Naive thymus-derived CD8-positive, alpha-beta T cell (primary cell): ENCODE measurements at regions of chr1 and their contacts with region 1.

Region 1: DNA sequence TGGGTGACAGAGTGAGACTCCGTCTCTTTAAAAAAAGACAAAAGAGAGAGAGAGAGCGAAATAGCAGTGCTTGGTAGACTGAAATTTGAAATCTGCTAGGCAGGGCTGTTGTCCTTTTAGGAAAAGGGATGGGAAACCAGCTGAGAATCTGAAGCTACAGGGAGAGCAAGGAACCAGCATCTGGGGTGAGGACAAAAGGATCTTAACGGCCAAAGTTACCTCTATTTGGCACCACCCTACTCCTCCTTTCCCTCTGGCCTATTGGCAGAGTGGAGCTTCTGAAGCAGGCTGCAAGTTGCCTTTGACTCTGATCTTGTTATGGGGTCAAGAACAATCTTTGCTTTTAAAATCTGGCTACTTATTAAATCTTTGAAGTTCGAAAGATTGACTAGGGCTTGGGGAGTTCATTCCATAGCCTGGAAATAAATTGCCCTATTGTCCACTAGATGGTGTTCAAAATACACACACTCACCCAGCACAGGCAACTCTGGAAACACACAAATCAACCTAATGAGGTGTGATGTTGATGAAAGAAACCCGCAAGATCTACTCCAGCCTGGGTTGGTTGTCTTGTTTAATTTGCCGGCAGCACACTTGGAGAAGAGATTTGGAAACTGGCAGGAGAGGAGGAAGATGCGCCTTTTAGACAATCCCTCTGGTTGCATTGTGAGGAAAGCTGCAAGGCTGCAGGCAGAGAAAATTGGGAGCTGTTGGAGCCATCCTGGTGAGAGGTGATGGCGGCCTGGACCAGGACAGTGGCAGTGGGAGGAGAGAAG is 16.5 kb upstream of the PARP1 start:
- DNase-seq: peak in 3 of 10 donors; percentile 42 to 58 (median 56)
- ATAC-seq: peak; percentile 61 to 65
- H3K4me3 Mint-ChIP-seq: peak overlapping the region in 2 of 10 donors; percentile 33 to 58
- H3K27ac Mint-ChIP-seq: peak overlapping the region in 2 of 10 donors; percentile 25 to 70
- H3K4me1 Mint-ChIP-seq: peaks cover 18 to 37% (median 33%) of the 10 kb centered on the region in 4 donors
- H3K27me3 Mint-ChIP-seq: no peaks in the 10 kb centered on the region

Region 2: GRCh38 chr1:226407497-226408284 is 16.7 kb before region 1 on chr1 and contains the start of gene PARP1:
- POLR2A ChIA-PET with region 1: interaction called, 21 read pairs
- DNase-seq: peak; percentile 79 to 93 (median 88)
- ATAC-seq: peak; percentile 85 to 86
- H3K4me3 Mint-ChIP-seq: peak within 1 kb of the TSS; percentile 92 to 100 (median 97)
- H3K27ac Mint-ChIP-seq: peak within 1 kb of the TSS; percentile 87 to 98 (median 96)
- H3K4me1 Mint-ChIP-seq: peaks cover 31 to 53% (median 50%) of the 10 kb centered on the region in 4 donors
- H3K27me3 Mint-ChIP-seq: no peaks in the 10 kb centered on the region
- polyA plus RNA-seq, gene PARP1: 98.6 to 128 (median 121) TPM

Region 3: GRCh38 chr1:226457307-226457712 is 32.9 kb after region 1 on chr1:
- POLR2A ChIA-PET with region 1: interaction called, 17 read pairs
- DNase-seq: peak; percentile 11 to 78 (median 60)
- ATAC-seq: peak; percentile 92 to 98
- H3K4me3 Mint-ChIP-seq: peak overlapping the region; percentile 46 to 90 (median 86)
- H3K27ac Mint-ChIP-seq: peak overlapping the region; percentile 41 to 93 (median 84)
- H3K4me1 Mint-ChIP-seq: peaks cover 11 to 17% (median 15%) of the 10 kb centered on the region in 4 donors
- H3K27me3 Mint-ChIP-seq: peaks cover 0 to 1% (median 0%) of the 10 kb centered on the region in 5 donors